Aorta (tissue), 5 donors: ENCODE measurements at regions of chr5 and their contacts with region 1.

Region 1: GRCh38 chr5:155978850-155979249 is 348.1 kb upstream of the SGCD start:
- DNase-seq: no peak
- ATAC-seq: peak; percentile 72
- H3K4me3 ChIP-seq: no peak overlapping the region
- H3K27ac ChIP-seq: peak overlapping the region in 1 of 2 donors; percentile 15
- H3K4me1 ChIP-seq: peaks cover 5 to 11% of the 10 kb centered on the region in 2 donors
- H3K27me3 ChIP-seq: no peaks in the 10 kb centered on the region

Region 2: GRCh38 chr5:156020647-156021046 is 41.8 kb after region 1 on chr5:
- intact Hi-C with region 1: loop called in 1 of 2 experiments (anchors 5 kb)
- DNase-seq: no peak
- ATAC-seq: no peak
- H3K4me3 ChIP-seq: no peak overlapping the region
- H3K27ac ChIP-seq: no peak overlapping the region
- H3K4me1 ChIP-seq: no peaks in the 10 kb centered on the region
- H3K27me3 ChIP-seq: no peaks in the 10 kb centered on the region

Region 3: GRCh38 chr5:156560002-156560401 is 581.2 kb after region 1 on chr5:
- intact Hi-C with region 1: no loop called
- DNase-seq: no peak
- ATAC-seq: no peak
- H3K4me3 ChIP-seq: no peak overlapping the region
- H3K27ac ChIP-seq: no peak overlapping the region
- H3K4me1 ChIP-seq: no peaks in the 10 kb centered on the region
- H3K27me3 ChIP-seq: no peaks in the 10 kb centered on the region